ENCODE measurements at regions of chr4 and their contacts with region 1.

Region 1: GRCh38 chr4:184417802-184418511 is 56.4 kb downstream of the IRF2 start:
- DNase-seq: peak in 3 of 9 experiments; percentile 14 to 68 (median 53)
- ATAC-seq: peak; percentile 71
- H3K4me3 ChIP-seq: peak overlapping the region in 1 of 2 experiments; percentile 44
- H3K4me3 Mint-ChIP-seq: peak overlapping the region; percentile 73
- H3K27ac ChIP-seq: peak overlapping the region; percentile 61 to 80
- H3K27ac Mint-ChIP-seq: peak overlapping the region; percentile 98
- H3K4me1 ChIP-seq: peaks cover 33% of the 10 kb centered on the region
- H3K4me1 Mint-ChIP-seq: peaks cover 71% of the 10 kb centered on the region
- H3K27me3 ChIP-seq: no peaks in the 10 kb centered on the region
- H3K27me3 Mint-ChIP-seq: no peaks in the 10 kb centered on the region
- CTCF ChIP-seq: no peak

Region 2: GRCh38 chr4:183659029-183659871 is 758.7 kb before region 1 on chr4 and contains the starts of genes RWDD4 and TRAPPC11:
- CTCF ChIA-PET with region 1: no interaction called
- POLR2A ChIA-PET with region 1: no interaction called
- intact Hi-C with region 1: loop called in 1 of 2 experiments (anchors 10 kb)
- DNase-seq: peak; percentile 90 to 99 (median 95)
- ATAC-seq: peak; percentile 96
- H3K4me3 ChIP-seq: peak within 1 kb of the TSS; percentile 72 to 83
- H3K4me3 Mint-ChIP-seq: peak within 1 kb of the TSS; percentile 92
- H3K27ac ChIP-seq: peak within 1 kb of the TSS; percentile 83 to 89
- H3K27ac Mint-ChIP-seq: peak within 1 kb of the TSS; percentile 91
- H3K4me1 ChIP-seq: peaks cover 25% of the 10 kb centered on the region
- H3K4me1 Mint-ChIP-seq: peaks cover 42% of the 10 kb centered on the region
- H3K27me3 ChIP-seq: no peaks in the 10 kb centered on the region
- H3K27me3 Mint-ChIP-seq: no peaks in the 10 kb centered on the region
- CTCF ChIP-seq: no peak
- total RNA-seq, gene RWDD4: 9.0 to 12.1 TPM
- total RNA-seq, gene TRAPPC11: 14.7 to 22.1 TPM

Region 3: GRCh38 chr4:183950536-183950935 is 467.4 kb before region 1 on chr4:
- CTCF ChIA-PET with region 1: no interaction called
- POLR2A ChIA-PET with region 1: no interaction called
- intact Hi-C with region 1: no loop called
- DNase-seq: no peak
- ATAC-seq: no peak
- H3K4me3 ChIP-seq: no peak overlapping the region
- H3K4me3 Mint-ChIP-seq: no peak overlapping the region
- H3K27ac ChIP-seq: no peak overlapping the region
- H3K27ac Mint-ChIP-seq: no peak overlapping the region
- H3K4me1 ChIP-seq: no peaks in the 10 kb centered on the region
- H3K4me1 Mint-ChIP-seq: no peaks in the 10 kb centered on the region
- H3K27me3 ChIP-seq: no peaks in the 10 kb centered on the region
- H3K27me3 Mint-ChIP-seq: peaks cover 16% of the 10 kb centered on the region
- CTCF ChIP-seq: no peak

Region 4: DNA sequence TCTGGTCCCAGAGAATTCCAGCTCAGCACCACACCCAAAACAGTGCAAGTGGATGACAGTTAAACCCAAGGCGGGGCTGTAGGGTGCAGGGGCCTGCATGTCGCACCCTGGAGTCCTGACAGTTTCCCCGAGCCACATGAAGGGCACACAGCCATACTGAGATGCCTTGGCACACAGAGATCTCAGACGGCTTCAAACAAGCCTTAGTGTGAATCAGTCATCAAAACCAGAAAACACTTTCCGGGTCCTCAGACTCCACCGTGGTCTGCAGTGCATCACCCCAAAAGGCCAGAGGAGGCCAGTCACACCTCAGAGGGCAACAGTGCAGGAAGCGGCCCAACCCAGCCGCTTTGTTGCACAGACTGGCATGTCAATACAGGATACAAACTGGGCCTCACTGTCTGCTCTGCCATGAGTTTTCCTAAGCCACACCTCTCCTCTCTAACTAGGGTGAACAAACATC is 135.7 kb before region 1 on chr4:
- CTCF ChIA-PET with region 1: no interaction called
- POLR2A ChIA-PET with region 1: no interaction called
- intact Hi-C with region 1: loop called in 1 of 2 experiments (anchors 5 kb)
- DNase-seq: peak; percentile 26 to 73 (median 50)
- ATAC-seq: peak; percentile 89
- H3K4me3 ChIP-seq: no peak overlapping the region
- H3K4me3 Mint-ChIP-seq: peak overlapping the region; percentile 11
- H3K27ac ChIP-seq: peak overlapping the region in 1 of 2 experiments; percentile 56
- H3K27ac Mint-ChIP-seq: no peak overlapping the region
- H3K4me1 ChIP-seq: peaks cover 30% of the 10 kb centered on the region
- H3K4me1 Mint-ChIP-seq: peaks cover 33% of the 10 kb centered on the region
- H3K27me3 ChIP-seq: no peaks in the 10 kb centered on the region
- H3K27me3 Mint-ChIP-seq: no peaks in the 10 kb centered on the region
- CTCF ChIP-seq: peak; percentile 22

Region 5: DNA sequence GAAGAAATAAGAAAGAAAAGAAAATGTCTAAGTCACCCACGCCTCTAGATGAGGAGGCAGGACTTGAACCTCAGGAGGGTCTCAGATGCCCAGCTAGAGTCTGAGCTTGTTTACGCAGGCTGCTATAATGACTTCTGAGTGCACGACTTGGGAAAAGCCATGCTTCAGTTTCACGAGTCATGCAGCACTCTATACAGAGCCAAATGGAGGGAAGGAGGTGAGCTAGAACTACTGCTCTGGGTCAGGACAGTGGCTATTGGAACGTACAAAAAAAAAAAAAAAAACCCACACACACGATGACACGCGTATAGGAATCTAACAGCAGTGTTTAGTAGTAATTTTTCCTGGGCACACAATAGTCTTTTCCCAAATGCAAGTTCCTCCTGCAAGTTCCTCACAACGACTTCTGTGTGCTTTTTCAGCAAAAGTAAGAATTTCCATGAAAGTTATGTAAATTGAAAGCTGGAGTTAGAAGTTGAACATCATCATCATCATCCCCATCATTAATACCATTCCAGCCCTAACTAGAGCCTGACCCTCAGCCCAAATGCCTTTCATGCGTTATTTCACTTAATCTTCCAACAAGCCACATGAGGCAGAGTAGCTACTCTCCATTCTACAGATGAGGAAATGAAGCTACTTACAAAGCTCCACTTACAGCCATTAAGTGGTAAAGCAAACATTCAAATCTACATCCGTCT is 19.8 kb after region 1 on chr4:
- CTCF ChIA-PET with region 1: interaction called, 6 read pairs
- POLR2A ChIA-PET with region 1: no interaction called
- intact Hi-C with region 1: loop called in 1 of 2 experiments (anchors 2 kb)
- DNase-seq: no peak
- ATAC-seq: no peak
- H3K4me3 ChIP-seq: no peak overlapping the region
- H3K4me3 Mint-ChIP-seq: no peak overlapping the region
- H3K27ac ChIP-seq: no peak overlapping the region
- H3K27ac Mint-ChIP-seq: peak overlapping the region; percentile 15
- H3K4me1 ChIP-seq: peaks cover 46% of the 10 kb centered on the region
- H3K4me1 Mint-ChIP-seq: peaks cover 82% of the 10 kb centered on the region
- H3K27me3 ChIP-seq: no peaks in the 10 kb centered on the region
- H3K27me3 Mint-ChIP-seq: no peaks in the 10 kb centered on the region
- CTCF ChIP-seq: no peak

Region 6: DNA sequence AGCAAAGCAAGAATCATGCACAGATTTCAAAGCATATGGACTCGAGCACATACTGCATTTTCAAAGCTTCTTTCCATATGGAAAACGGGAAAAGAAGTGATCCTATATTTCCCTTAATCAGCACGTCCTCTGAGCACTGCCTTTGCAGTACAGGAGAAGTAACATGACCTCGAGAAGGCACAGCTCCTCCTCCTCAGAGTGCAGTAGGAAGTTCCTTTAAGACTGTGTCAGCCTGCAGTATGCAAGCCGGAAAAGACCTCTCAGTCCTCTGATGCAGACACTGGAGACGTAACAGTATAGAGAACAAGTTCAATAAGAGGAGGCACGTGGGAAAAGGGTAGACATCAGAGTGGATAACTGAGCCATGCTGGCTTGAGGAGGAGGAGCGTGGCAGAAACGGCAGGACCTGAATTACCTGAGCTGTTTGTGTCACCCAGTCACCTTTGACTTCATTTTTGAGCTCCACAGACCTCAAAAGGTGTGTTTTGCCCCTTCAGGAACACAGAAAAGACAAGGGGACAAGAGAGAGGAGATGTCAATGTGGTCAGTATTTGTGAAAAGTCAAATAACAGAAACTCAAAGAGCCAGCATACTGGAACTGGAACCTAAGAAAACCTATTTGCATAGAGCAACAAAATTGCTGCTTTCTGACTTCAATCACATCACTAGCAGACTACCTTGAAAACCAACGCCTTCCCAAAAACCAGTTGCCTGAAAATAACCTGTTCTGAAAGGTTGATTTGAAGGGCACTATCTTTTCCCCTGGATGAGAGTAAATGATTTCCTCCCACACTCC is 35.6 kb after region 1 on chr4:
- CTCF ChIA-PET with region 1: no interaction called
- POLR2A ChIA-PET with region 1: interaction called, 4 read pairs
- intact Hi-C with region 1: loop called in 1 of 2 experiments (anchors 5 kb)
- DNase-seq: peak in 7 of 9 experiments; percentile 16 to 82 (median 57)
- ATAC-seq: peak; percentile 98
- H3K4me3 ChIP-seq: no peak overlapping the region
- H3K4me3 Mint-ChIP-seq: peak overlapping the region; percentile 40
- H3K27ac ChIP-seq: peak overlapping the region; percentile 25 to 78
- H3K27ac Mint-ChIP-seq: peak overlapping the region; percentile 97
- H3K4me1 ChIP-seq: peaks cover 35% of the 10 kb centered on the region
- H3K4me1 Mint-ChIP-seq: peaks cover 84% of the 10 kb centered on the region
- H3K27me3 ChIP-seq: no peaks in the 10 kb centered on the region
- H3K27me3 Mint-ChIP-seq: no peaks in the 10 kb centered on the region
- CTCF ChIP-seq: no peak

Measured in CD8-positive, alpha-beta T cell (primary cell).